ENCODE measurements at regions of chr3 and their contacts with region 1.

Region 1: DNA sequence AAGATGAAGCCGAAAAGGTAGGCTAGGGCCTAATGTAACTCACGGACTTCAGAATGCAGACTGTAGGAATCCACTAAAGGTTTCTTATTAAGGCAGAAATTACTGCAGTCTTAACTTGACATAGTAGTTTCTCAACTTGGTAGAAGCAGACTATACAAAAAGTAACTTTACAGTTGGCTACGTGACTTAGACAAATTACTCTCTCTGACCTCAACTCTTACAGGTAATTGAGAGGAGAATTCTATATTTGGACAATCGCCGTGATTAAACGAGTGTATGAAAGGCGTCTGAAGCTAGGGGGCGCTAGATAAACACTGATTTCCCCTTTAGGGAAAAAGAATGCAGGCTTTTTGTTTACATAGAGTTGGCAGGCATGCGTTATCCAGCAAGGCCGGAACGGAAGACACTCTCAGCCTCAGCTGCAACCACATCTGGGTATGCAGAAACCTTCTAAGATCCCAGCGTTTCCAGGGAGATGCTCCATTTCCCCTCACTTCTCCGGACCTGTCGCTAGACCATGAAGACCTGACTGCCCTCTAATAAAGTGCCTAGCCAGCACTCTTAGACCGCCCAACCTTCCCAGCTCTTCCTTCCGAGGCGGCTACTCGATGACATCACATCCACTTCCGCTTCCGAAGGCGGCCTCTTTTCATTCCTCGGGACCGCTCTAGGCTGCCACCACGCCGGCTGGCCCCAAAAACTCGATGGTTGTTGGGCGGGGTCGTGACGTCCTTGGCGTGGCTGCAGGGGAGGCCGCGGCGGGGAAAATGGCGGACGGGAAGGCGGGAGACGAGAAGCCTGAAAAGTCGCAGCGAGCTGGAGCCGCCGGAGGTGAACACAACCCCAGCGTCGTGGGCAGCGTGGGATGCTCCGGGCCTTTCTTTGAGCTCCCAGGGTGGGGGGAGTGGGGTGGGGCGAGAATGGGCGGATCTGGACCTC is at the start of gene PCNP:
- DNase-seq: peak; percentile 98 to 99
- H3K4me3 ChIP-seq: peak within 1 kb of the TSS; percentile 68 to 95
- H3K27ac ChIP-seq: peak within 1 kb of the TSS; percentile 98
- H3K4me1 ChIP-seq: peaks cover 37% of the 10 kb centered on the region
- H3K27me3 ChIP-seq: no peaks in the 10 kb centered on the region
- CTCF ChIP-seq: peak; percentile 78 to 92 (median 91)
- POLR2A ChIP-seq: peak in 1 of 2 donors; percentile 52
- total RNA-seq, gene PCNP: 96.3 TPM

Region 2: GRCh38 chr3:101512646-101513418 is 60.9 kb before region 1 on chr3 and contains the start of gene SENP7:
- intact Hi-C with region 1: loop called (anchors 10 kb)
- DNase-seq: no peak
- H3K4me3 ChIP-seq: peak within 1 kb of the TSS; percentile 90 to 94
- H3K27ac ChIP-seq: peak within 1 kb of the TSS; percentile 97
- H3K4me1 ChIP-seq: peaks cover 29% of the 10 kb centered on the region
- H3K27me3 ChIP-seq: no peaks in the 10 kb centered on the region
- CTCF ChIP-seq: no peak
- POLR2A ChIP-seq: no peak
- total RNA-seq, gene SENP7: 17.9 TPM

Region 3: DNA sequence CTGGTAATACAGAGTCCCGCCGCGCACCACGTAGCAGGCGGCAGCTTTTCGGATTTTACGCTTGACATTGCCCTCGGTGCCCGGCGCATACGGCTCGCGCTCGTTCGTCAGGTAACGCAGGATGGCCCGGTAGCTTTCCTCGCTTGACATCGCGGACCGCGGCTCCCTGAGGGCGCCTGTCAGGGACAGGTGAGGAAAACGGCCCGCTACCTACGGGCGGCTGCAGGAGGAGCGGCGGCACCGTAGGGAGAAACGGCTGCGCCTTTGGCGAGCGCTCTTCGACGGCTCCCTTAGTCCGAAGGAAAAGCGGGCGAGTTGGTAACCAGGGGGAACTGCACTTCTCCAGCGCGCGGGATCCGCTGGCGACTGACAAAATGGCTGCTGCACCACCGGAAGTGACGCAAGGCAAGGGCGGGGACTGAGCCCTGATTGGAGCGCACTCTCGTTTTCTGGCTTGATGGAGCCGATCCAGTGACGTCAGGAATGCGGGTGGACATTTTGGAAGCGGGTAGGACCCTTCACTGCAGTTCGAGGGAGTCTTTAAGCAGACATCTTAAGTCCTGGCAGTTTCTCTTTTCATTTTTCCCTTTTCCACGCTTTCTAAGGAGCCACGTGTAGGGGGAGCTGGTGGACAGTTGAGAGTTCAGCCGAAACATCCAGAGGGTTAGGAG is 103.2 kb after region 1 on chr3 and contains the start of gene ZBTB11:
- intact Hi-C with region 1: loop called (anchors 5 kb)
- DNase-seq: peak; percentile 99
- H3K4me3 ChIP-seq: peak within 1 kb of the TSS; percentile 76 to 94
- H3K27ac ChIP-seq: peak within 1 kb of the TSS; percentile 94
- H3K4me1 ChIP-seq: peaks cover 44% of the 10 kb centered on the region
- H3K27me3 ChIP-seq: no peaks in the 10 kb centered on the region
- CTCF ChIP-seq: peak in 2 of 3 experiments; percentile 20 to 40
- POLR2A ChIP-seq: peak in 1 of 2 donors; percentile 91
- total RNA-seq, gene ZBTB11: 27.5 TPM

Measured in vagina (tissue), 2 donors.